Posterior vena cava (tissue), 2 donors: ENCODE measurements at regions of chr17 and their contacts with region 1.

Region 1: GRCh38 chr17:81094509-81095382 is 59.8 kb downstream of the BAIAP2 start:
- DNase-seq: peak; percentile 93

Region 2: GRCh38 chr17:79188048-79188447 is 1906.7 kb before region 1 on chr17:
- intact Hi-C with region 1: no loop called
- DNase-seq: no peak

Region 3: GRCh38 chr17:80991645-80992076 is 103.1 kb before region 1 on chr17 and contains the start of gene CHMP6:
- intact Hi-C with region 1: loop called (anchors 2 kb)
- DNase-seq: peak; percentile 93
- total RNA-seq, gene CHMP6: 23.7 to 25.9 TPM

Region 4: DNA sequence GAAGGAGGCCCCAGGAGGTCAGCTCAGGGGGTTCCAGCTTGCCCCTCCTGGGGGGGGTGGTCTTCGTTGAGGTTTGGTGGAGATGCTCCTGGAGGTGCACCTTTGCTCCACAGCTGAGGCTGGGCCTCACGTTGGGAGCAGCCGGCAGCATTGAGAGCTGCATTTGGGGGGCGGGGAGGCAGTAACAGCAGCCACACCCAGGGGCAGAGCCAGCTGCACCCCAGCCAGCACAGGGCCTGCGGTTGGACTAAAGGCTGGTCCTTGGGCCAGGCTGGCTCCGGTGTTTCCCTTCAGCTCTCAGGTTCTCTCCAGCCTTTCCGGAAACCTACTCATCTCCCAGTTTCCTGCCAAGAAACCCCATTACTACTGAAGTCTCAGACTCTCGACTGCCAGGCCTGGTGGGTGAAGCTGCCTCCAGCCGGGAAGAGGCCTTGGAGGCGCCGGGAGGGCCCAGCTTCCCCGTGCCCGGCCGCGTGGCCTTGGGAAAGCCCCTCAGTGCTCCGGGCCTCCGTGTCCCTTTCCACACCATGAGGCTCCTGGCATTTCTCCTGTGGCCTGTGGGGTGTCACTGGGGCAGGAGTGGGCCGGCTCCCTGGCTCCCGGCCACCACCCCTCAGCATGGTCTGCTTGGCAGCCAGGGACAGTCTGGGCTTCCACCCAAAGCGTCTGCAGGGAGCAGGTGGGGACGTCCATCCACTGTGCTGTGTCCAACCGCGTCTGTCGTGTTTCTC is 73.8 kb before region 1 on chr17:
- intact Hi-C with region 1: loop called in 1 of 2 experiments (anchors 5 kb)
- DNase-seq: no peak

Region 5: GRCh38 chr17:81040791-81041337 is 53.9 kb before region 1 on chr17:
- intact Hi-C with region 1: loop called in 1 of 2 experiments (anchors 10 kb)
- DNase-seq: no peak

Region 6: DNA sequence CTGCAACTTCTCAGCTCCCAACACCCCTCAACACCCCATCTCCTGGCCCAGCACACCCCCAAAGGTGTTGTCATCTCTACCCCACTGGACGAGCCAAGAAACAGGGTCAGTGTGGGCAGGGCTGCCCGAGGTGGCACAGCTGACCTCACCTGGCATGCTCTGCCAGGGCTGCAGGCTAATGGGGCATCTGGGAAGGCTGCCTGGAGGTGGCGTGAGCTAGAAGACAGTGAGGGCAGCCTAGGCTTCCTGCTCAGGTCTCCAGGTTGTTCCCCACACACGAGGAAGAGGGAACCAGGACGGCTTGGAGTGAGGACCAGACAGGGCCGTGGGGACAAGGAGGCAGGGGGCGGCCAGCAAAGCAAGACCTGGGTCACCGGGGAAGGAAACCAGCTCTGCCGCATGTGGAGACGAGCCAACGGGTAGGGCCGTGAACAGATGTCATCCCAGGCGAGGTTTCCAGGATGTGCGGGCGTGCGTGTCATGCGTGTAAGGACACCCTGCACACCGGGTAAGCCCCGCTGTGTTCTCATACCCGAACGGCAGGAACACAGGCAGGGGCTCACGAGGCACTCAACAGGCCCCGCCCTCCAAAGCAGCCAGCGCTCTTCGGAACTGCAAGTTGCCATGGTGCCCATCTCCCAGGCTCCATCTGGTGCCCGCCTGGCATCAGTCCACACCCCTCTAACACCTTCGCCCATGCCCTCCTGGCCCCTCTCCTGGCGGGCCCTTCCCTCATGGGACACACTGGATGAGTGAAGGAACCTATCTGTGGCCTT is 40.9 kb after region 1 on chr17:
- intact Hi-C with region 1: no loop called
- DNase-seq: no peak

Region 7: GRCh38 chr17:81159611-81160265 is 65.0 kb after region 1 on chr17:
- intact Hi-C with region 1: loop called in 1 of 2 experiments (anchors 2 kb)
- DNase-seq: no peak

Region 8: DNA sequence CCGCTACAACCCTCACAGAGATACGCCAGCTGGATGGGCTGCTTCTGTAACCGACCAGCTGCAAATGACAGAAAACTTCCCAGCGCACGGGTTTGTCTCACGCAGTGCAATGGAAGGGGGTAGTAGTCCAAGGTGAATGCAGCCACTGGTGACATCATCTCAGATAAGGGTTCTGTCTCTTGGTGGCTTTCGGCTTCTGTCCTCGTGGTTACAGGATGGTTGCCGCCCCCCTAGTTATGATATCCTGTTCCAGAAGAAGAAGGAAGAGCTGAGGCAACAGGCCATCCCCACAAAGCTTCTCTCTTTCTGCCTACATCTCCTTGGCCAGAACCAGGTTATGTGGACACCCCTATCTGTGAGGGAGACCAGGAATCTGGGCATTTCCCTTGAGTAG is 260.2 kb after region 1 on chr17:
- intact Hi-C with region 1: no loop called
- DNase-seq: no peak